ENCODE measurements at regions of chr14 and their contacts with region 1.

Region 1: DNA sequence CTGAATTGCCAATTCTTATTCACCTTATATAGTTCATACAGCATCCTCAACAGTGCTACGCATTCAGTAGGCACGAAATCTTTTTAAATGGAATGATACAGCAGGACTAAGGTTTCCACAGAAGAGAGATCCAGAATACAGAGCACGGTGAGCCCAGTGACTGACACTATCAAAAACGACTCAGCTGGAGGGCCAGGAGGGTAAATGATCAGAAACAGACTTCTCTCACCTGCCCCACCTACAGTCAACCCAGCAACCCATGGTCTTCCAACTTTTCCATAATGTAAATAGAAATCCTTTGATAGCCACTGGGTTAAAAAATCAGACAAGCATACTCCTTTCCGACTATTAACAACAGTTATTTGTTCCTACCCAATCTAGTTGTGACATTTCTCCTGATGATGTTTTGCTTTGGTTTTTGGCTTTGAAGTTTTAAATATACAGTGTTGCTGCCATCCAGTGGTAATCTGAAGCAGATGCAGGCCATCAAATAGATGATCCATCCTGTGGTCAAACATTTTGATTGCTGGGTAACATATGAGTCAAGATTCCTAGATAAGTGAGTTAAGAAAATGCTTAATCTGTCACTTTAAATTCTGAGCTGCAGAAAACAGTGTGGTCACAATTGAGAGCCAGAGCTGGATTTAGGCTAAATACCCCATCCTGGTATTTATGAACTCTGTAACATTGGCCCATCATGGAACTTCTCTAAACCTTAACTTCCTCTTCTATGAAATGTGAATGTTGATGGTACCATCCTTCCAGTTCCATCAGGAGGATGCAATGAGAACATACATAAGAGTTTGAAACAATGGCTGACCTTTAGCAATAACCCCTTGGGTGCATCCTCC is 42.0 kb downstream of the GPHB5 start:
- DNase-seq: peak; percentile 21
- ATAC-seq: peak; percentile 69; the same call in 1 of the 2 replicates
- H3K4me3 ChIP-seq: no peak overlapping the region
- H3K27ac ChIP-seq: no peak overlapping the region
- H3K4me1 ChIP-seq: no peaks in the 10 kb centered on the region
- H3K27me3 ChIP-seq: peaks cover 12% of the 10 kb centered on the region
- CTCF ChIP-seq: peak; percentile 50 to 92 (median 70); a peak in 5 of 6 replicates
- POLR2A ChIP-seq: no peak
- RAD21 ChIP-seq: peak; percentile 74

Region 2: GRCh38 chr14:61894452-61895077 is 1382.2 kb before region 1 on chr14:
- CTCF ChIA-PET with region 1: no interaction called
- POLR2A ChIA-PET with region 1: no interaction called
- RAD21 ChIA-PET with region 1: no interaction called
- intact Hi-C with region 1: loop called (anchors 10 kb)
- DNase-seq: peak; percentile 44
- ATAC-seq: peak; percentile 92
- H3K4me3 ChIP-seq: no peak overlapping the region
- H3K27ac ChIP-seq: no peak overlapping the region
- H3K4me1 ChIP-seq: no peaks in the 10 kb centered on the region
- H3K27me3 ChIP-seq: peaks cover 51% of the 10 kb centered on the region
- CTCF ChIP-seq: peak; percentile 38 to 84 (median 78); a peak in 5 of 6 replicates
- POLR2A ChIP-seq: no peak
- RAD21 ChIP-seq: peak; percentile 62

Region 3: DNA sequence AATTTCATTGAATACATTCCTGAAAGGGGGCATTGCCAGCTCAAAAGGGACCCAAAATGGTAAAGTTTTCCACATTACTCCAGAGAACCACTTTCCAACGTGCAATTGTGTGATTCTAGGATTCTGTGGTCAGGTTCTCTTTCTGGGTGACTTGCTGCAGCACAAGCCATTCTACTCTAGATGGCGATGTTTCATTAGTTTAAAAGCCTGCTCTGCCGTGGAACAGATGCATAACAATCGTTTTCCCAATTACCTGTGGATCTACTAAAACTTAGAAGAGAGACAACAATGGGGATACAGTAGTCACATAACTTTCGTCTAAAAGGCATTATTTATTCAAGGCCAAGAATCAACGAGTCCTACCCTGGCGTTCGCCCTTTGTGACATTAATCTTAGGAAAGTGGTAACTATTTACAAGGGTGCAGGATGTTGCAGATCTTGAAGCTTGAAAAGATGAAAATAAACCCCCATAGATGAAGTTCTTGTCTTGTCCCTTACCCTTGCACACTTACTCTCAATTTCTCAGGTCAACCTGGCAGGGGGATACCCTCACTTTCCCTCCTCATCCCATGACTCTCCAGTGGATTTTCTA is 1113.6 kb before region 1 on chr14:
- CTCF ChIA-PET with region 1: no interaction called
- POLR2A ChIA-PET with region 1: no interaction called
- RAD21 ChIA-PET with region 1: no interaction called
- intact Hi-C with region 1: loop called (anchors 1 kb)
- DNase-seq: peak; percentile 23
- ATAC-seq: peak; percentile 77
- H3K4me3 ChIP-seq: no peak overlapping the region
- H3K27ac ChIP-seq: no peak overlapping the region
- H3K4me1 ChIP-seq: no peaks in the 10 kb centered on the region
- H3K27me3 ChIP-seq: no peaks in the 10 kb centered on the region; the same call in 1 of the 2 replicates
- CTCF ChIP-seq: peak; percentile 41 to 81 (median 73); a peak in 5 of 6 replicates
- POLR2A ChIP-seq: no peak
- RAD21 ChIP-seq: peak; percentile 65

Region 4: GRCh38 chr14:62179367-62180018 is 1097.2 kb before region 1 on chr14:
- CTCF ChIA-PET with region 1: interaction called, 3 read pairs
- POLR2A ChIA-PET with region 1: no interaction called
- RAD21 ChIA-PET with region 1: interaction called in 1 of 2 experiments, 5 read pairs
- intact Hi-C with region 1: loop called (anchors 1 kb)
- DNase-seq: peak; percentile 13
- ATAC-seq: no peak; the same call in 1 of the 2 replicates
- H3K4me3 ChIP-seq: no peak overlapping the region
- H3K27ac ChIP-seq: no peak overlapping the region
- H3K4me1 ChIP-seq: no peaks in the 10 kb centered on the region
- H3K27me3 ChIP-seq: no peaks in the 10 kb centered on the region
- CTCF ChIP-seq: peak; percentile 27 to 52 (median 51); a peak in 4 of 6 replicates
- POLR2A ChIP-seq: no peak
- RAD21 ChIP-seq: peak; percentile 60

Region 5: GRCh38 chr14:63134801-63135200 is 141.9 kb before region 1 on chr14:
- CTCF ChIA-PET with region 1: no interaction called
- POLR2A ChIA-PET with region 1: no interaction called
- RAD21 ChIA-PET with region 1: no interaction called
- intact Hi-C with region 1: no loop called
- DNase-seq: no peak
- ATAC-seq: no peak
- H3K4me3 ChIP-seq: no peak overlapping the region
- H3K27ac ChIP-seq: no peak overlapping the region
- H3K4me1 ChIP-seq: no peaks in the 10 kb centered on the region
- H3K27me3 ChIP-seq: no peaks in the 10 kb centered on the region
- CTCF ChIP-seq: peak in 2 of 3 experiments; percentile 2 to 30; a peak in 3 of 6 replicates
- POLR2A ChIP-seq: no peak
- RAD21 ChIP-seq: no peak

Region 6: DNA sequence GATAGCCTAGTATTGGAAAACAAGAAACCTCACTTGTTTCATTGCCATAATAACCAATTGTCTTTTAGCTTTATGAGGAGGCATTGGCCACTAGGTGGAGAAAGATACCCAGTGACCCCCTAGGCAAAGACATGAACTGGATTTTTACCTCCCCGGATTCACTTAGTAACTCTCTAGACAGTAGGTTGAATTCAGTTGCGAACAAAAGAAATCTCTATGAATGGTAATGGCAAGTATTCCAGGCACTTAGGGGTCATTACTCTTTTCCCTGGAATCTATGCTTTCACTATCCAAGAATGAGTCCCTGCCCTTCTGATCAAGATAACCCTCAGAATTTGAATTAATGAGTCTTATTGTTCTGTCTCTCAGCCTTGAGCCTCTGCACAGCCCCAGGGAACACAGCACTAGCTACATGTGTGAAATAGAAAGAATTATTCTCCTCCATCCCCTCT is 101.9 kb before region 1 on chr14:
- CTCF ChIA-PET with region 1: interaction called, 6 read pairs
- POLR2A ChIA-PET with region 1: interaction called, 3 read pairs
- RAD21 ChIA-PET with region 1: no interaction called
- intact Hi-C with region 1: loop called (anchors 2 kb)
- DNase-seq: peak; percentile 12
- ATAC-seq: peak; percentile 66
- H3K4me3 ChIP-seq: no peak overlapping the region
- H3K27ac ChIP-seq: no peak overlapping the region
- H3K4me1 ChIP-seq: no peaks in the 10 kb centered on the region
- H3K27me3 ChIP-seq: no peaks in the 10 kb centered on the region; the same call in 1 of the 2 replicates
- CTCF ChIP-seq: peak; percentile 30 to 60 (median 51); a peak in 5 of 6 replicates
- POLR2A ChIP-seq: no peak
- RAD21 ChIP-seq: peak; percentile 54

Region 7: DNA sequence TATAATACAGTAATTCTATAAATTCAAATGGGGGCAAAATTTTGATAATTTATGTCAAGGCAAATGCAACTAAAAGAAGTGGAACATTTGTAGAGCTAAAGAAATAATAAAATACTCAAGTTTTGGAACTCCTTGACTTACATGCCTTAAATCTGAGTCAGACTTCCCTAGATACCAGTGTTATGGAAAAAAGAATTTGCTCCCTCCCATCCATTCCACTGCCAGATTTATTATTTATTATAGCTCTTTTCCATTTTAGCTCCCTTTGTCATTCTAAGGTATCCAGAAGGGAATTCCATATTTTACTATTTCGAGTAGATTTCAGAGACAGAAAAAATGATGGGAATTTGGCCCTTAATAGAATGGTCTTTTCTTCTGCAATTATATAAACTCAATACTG is 28.5 kb before region 1 on chr14:
- CTCF ChIA-PET with region 1: no interaction called
- POLR2A ChIA-PET with region 1: no interaction called
- RAD21 ChIA-PET with region 1: no interaction called
- intact Hi-C with region 1: no loop called
- DNase-seq: no peak
- ATAC-seq: no peak
- H3K4me3 ChIP-seq: no peak overlapping the region
- H3K27ac ChIP-seq: no peak overlapping the region
- H3K4me1 ChIP-seq: no peaks in the 10 kb centered on the region
- H3K27me3 ChIP-seq: peaks cover 18% of the 10 kb centered on the region
- CTCF ChIP-seq: no peak
- POLR2A ChIP-seq: no peak
- RAD21 ChIP-seq: no peak

Measured in HCT116 (cell line).